Cardiac septum (tissue), 1 donor: ENCODE measurements at regions of chr3 and their contacts with region 1.

Region 1: GRCh38 chr3:56748663-56749231 is 53.0 kb downstream of the ARHGEF3 start:
- DNase-seq: no peak

Region 2: DNA sequence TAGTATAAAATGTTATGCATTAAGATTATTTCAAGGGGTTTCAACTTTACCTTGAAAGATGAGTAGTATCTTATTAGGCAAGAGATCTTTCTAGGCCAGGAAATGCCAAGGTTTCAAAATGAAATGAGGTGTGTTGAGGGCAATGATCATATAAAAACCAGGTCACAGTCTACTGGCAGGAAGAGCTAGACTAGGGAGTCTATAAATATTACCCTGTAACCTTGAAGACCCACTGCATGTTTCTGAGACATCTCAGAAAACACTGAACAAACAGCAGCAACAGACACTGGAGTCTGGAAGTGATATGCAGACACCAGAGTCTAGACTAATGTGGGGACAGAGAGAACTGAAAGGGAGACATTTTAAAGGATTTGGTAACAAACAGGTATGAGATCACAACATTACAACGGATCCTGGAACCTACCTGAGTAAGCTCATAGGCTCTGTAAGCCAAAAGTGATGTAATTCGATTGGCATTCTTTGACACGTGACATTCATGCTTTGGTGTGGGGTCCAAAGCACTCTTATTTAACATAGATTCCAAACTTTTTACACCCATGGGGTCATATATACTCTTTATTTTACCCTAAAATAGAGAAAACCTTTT is 80.7 kb before region 1 on chr3:
- intact Hi-C with region 1: no loop called
- DNase-seq: no peak

Region 3: DNA sequence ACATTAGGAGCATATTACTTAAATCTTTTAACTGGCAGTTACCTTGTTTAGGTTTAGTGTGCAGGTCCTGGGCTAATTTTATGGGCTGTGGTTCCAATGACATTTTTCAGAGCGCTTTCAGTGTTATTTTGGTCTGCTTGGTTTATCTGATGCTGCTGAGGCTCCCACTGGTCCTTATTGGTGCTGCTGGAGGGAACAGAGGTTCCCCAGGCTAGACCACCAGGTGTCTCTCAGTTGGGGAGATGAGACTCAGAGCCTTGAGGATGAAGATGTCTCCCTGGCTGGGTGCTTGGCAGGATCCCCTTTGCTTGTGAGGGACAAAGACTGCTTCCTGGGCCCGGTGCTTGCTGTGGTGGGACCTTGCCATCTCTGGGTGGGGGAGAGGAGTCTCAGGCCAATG is 37.4 kb before region 1 on chr3:
- intact Hi-C with region 1: loop called (anchors 5 kb)
- DNase-seq: no peak